Transverse colon (tissue), 4 donors: ENCODE measurements at regions of chr4 and their contacts with region 1.

Region 1: DNA sequence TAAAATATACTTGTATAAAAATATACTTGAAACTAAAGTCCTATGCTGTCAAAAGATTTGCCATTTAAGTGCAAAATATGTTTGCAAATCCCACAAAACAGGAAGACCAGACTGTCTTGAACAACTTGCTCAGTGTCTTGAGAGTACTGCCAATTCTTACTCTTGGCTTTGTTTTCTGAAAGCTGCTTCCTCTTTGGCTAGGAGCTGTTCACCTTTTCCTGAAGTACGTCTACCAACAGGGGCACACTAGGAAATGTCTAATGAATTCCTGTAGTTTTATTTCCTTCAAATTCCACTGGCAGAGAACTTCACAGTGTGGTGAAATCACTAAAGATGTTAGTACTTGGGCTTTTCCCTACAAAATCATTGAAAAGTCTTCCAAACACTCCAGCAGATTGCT is 46.4 kb upstream of the ABCG2 start:
- DNase-seq: no peak
- H3K4me3 ChIP-seq: no peak overlapping the region
- H3K27ac ChIP-seq: no peak overlapping the region
- H3K4me1 ChIP-seq: peaks cover 0 to 4% (median 1%) of the 10 kb centered on the region in 4 donors
- H3K27me3 ChIP-seq: no peaks in the 10 kb centered on the region
- CTCF ChIP-seq: no peak
- EP300 ChIP-seq: no peak
- POLR2A ChIP-seq: no peak

Region 2: DNA sequence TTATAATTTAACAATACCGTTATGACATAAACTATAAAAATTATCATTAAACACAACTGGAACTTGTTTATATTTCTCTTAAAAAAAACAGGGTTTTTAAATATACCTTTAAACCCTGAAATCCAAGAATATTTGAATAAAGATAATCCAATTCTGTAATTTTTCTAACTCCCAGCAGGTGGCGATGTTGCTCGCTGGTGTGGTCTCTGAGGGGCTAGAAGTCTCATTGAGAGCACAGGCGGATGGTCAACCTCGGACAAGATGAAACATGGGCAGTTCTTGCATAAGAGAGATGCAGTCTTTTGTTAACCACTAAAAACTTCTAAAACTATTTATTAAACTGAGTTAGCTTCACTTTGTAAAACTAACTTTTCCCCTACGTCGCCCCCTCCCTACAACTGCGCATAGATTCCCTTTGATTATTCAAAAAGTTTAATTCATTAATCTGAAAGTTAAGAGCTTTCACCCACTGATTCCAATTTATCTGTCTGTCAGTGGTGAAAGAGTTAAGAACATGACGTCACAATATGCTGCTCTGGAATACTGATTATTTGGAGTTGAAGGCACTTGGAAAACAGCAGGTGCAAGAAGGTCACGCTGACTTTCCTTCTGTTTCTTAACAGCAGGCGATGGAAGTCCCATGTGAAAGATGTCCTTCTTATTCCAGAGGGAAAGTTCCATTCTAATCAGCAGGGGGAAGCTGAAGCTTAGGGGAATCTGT is 525.3 kb before region 1 on chr4:
- in situ Hi-C with region 1: loop called in 3 of 4 experiments (anchors 25 kb)
- intact Hi-C with region 1: loop called (anchors 10 kb)
- DNase-seq: peak; percentile 19
- H3K4me3 ChIP-seq: no peak overlapping the region
- H3K27ac ChIP-seq: no peak overlapping the region
- H3K4me1 ChIP-seq: no peaks in the 10 kb centered on the region
- H3K27me3 ChIP-seq: no peaks in the 10 kb centered on the region
- CTCF ChIP-seq: peak; percentile 52 to 77 (median 67)
- EP300 ChIP-seq: no peak
- POLR2A ChIP-seq: no peak

Region 3: DNA sequence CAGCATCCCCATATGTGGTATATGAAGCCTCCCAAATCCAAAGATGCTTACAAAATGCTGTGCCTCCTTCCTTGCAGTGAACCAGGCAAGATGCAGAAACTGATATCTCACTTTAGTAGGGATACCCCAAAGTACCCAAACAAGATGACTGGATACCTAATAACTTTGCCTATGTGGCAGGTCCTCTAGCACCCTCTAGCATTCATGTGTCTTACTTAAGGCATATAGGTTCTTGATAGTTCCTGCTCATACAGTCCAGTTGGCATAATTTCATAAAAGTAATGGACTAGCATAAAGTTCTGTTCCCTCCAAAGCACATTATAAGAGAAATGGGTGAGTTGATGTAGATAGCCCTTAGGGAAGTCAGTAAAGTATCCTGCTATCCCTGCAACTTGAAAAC is 266.1 kb before region 1 on chr4:
- in situ Hi-C with region 1: no loop called
- intact Hi-C with region 1: no loop called
- DNase-seq: no peak
- H3K4me3 ChIP-seq: no peak overlapping the region
- H3K27ac ChIP-seq: no peak overlapping the region
- H3K4me1 ChIP-seq: no peaks in the 10 kb centered on the region
- H3K27me3 ChIP-seq: no peaks in the 10 kb centered on the region
- CTCF ChIP-seq: no peak
- EP300 ChIP-seq: no peak
- POLR2A ChIP-seq: no peak

Region 4: GRCh38 chr4:88054901-88055300 is 150.0 kb before region 1 on chr4:
- in situ Hi-C with region 1: loop called in 3 of 4 experiments (anchors 10 kb)
- intact Hi-C with region 1: no loop called
- DNase-seq: peak; percentile 37
- H3K4me3 ChIP-seq: no peak overlapping the region
- H3K27ac ChIP-seq: no peak overlapping the region
- H3K4me1 ChIP-seq: no peaks in the 10 kb centered on the region
- H3K27me3 ChIP-seq: no peaks in the 10 kb centered on the region
- CTCF ChIP-seq: peak; percentile 41 to 78 (median 54)
- EP300 ChIP-seq: no peak
- POLR2A ChIP-seq: no peak

Region 5: GRCh38 chr4:88429401-88429800 is 224.5 kb after region 1 on chr4:
- in situ Hi-C with region 1: no loop called
- intact Hi-C with region 1: no loop called
- DNase-seq: no peak
- H3K4me3 ChIP-seq: no peak overlapping the region
- H3K27ac ChIP-seq: no peak overlapping the region
- H3K4me1 ChIP-seq: no peaks in the 10 kb centered on the region
- H3K27me3 ChIP-seq: no peaks in the 10 kb centered on the region
- CTCF ChIP-seq: no peak
- EP300 ChIP-seq: no peak
- POLR2A ChIP-seq: no peak

Region 6: GRCh38 chr4:88953400-88953799 is 748.5 kb after region 1 on chr4:
- in situ Hi-C with region 1: no loop called
- intact Hi-C with region 1: no loop called
- DNase-seq: no peak
- H3K4me3 ChIP-seq: no peak overlapping the region
- H3K27ac ChIP-seq: no peak overlapping the region
- H3K4me1 ChIP-seq: peaks cover 0 to 22% (median 5%) of the 10 kb centered on the region in 4 donors
- H3K27me3 ChIP-seq: no peaks in the 10 kb centered on the region
- CTCF ChIP-seq: no peak
- EP300 ChIP-seq: no peak
- POLR2A ChIP-seq: no peak